ENCODE measurements at regions of chr12 and their contacts with region 1.

Region 1: GRCh38 chr12:95815635-95816212 is 25.2 kb upstream of the NTN4 start:
- DNase-seq: no peak
- H3K4me3 ChIP-seq: no peak overlapping the region
- H3K27ac ChIP-seq: no peak overlapping the region
- H3K4me1 ChIP-seq: no peaks in the 10 kb centered on the region
- H3K27me3 ChIP-seq: no peaks in the 10 kb centered on the region
- CTCF ChIP-seq: peak in 2 of 3 experiments; percentile 43 to 67; a peak in 2 of 4 replicates
- EP300 ChIP-seq: no peak
- POLR2A ChIP-seq: no peak
- RAD21 ChIP-seq: peak; percentile 79

Region 2: DNA sequence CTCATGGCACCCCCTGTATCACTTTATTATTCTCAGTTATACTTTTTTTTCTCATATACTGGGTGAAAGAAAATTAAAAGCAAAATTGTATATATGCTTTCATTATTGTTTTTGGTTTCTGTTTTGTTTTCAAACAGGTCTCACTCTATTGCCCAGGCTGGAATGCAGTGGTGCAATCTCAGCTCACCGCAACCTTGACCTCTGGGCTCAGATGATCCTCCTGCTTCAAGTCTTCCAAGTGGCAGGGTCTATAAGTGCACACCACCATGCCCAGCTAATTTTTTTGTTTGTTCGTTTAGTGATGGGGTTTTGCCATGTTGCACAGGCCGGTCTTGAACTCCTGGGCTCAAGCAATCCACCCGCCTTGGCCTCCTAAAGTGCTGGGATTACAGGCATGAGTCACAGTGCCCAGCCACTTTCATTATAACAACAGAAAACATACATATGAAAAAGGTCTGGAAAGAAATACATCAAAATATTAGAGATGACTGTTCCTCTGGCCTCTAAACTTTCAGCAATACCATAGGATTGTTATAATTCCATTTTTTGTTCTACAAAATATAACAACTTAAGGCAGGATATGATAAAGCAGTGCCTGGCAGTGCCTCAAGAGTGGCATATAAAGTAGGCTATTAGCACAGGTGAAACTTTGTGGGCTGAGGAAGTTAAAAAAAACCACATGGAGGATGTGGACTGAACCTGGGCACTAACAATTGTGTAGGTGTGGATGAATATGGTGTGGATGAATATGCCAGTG is 19.3 kb before region 1 on chr12:
- CTCF ChIA-PET with region 1: interaction called, 11 read pairs
- POLR2A ChIA-PET with region 1: no interaction called
- DNase-seq: no peak
- H3K4me3 ChIP-seq: no peak overlapping the region
- H3K27ac ChIP-seq: no peak overlapping the region
- H3K4me1 ChIP-seq: peaks cover 0 to 2% (median 0%) of the 10 kb centered on the region in 4 experiments; a peak in 1 of 7 replicates
- H3K27me3 ChIP-seq: peaks cover 3 to 10% (median 5%) of the 10 kb centered on the region in 4 experiments
- CTCF ChIP-seq: no peak
- EP300 ChIP-seq: no peak
- POLR2A ChIP-seq: no peak
- RAD21 ChIP-seq: no peak

Region 3: GRCh38 chr12:95896846-95897245 is 81.1 kb after region 1 on chr12:
- CTCF ChIA-PET with region 1: no interaction called
- POLR2A ChIA-PET with region 1: no interaction called
- DNase-seq: no peak
- H3K4me3 ChIP-seq: no peak overlapping the region
- H3K27ac ChIP-seq: no peak overlapping the region
- H3K4me1 ChIP-seq: no peaks in the 10 kb centered on the region
- H3K27me3 ChIP-seq: no peaks in the 10 kb centered on the region
- CTCF ChIP-seq: no peak
- EP300 ChIP-seq: no peak
- POLR2A ChIP-seq: no peak
- RAD21 ChIP-seq: no peak

Measured in H1 (cell line).